ENCODE measurements at regions of chr12 and their contacts with region 1.

Region 1: DNA sequence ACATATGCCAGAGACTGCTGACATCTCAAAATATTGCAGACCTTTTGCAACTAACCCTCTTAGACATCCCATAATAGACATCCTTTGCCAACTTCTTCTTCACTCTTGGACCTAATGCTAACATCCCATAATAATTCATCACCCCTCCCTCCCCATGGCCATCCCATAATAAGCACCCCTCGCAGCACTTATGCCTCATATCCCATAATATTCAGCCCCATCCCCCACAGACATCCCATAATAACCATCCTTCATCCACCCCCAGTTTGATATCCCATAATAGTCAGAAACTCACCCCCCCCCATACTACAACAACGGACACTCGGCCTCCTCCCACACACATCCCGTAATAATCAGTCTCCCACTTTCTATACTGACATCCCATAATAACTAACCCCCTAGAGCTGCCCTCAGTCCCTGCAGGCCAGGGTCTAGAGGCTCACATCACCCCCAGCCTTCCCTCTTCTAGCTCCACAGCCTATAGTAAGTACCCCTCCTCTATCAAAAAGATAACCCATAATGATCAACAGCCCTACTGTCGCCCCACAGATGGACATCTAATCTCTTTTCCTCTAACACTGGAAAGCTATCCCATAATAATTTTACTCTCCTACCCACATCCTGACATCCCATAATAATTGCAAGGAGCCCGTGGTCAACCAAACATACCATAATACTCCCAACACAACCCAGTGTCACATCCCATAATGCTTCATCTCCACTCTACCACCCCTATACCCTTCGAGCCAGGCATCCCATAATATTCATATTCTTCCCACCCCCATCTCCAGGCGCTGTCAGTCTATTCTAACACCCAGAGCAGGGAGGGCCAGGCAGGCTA is 792 bp upstream of the CHD4 start:
- DNase-seq: peak in 8 of 9 experiments; percentile 38 to 92 (median 67)
- ATAC-seq: peak; percentile 45
- H3K4me3 ChIP-seq: no peak overlapping the region
- H3K4me3 Mint-ChIP-seq: no peak overlapping the region
- H3K27ac ChIP-seq: peak overlapping the region; percentile 76 to 96
- H3K27ac Mint-ChIP-seq: no peak overlapping the region
- H3K4me1 ChIP-seq: peaks cover 63% of the 10 kb centered on the region
- H3K4me1 Mint-ChIP-seq: peaks cover 48% of the 10 kb centered on the region
- H3K27me3 ChIP-seq: no peaks in the 10 kb centered on the region
- H3K27me3 Mint-ChIP-seq: no peaks in the 10 kb centered on the region
- CTCF ChIP-seq: no peak

Region 2: DNA sequence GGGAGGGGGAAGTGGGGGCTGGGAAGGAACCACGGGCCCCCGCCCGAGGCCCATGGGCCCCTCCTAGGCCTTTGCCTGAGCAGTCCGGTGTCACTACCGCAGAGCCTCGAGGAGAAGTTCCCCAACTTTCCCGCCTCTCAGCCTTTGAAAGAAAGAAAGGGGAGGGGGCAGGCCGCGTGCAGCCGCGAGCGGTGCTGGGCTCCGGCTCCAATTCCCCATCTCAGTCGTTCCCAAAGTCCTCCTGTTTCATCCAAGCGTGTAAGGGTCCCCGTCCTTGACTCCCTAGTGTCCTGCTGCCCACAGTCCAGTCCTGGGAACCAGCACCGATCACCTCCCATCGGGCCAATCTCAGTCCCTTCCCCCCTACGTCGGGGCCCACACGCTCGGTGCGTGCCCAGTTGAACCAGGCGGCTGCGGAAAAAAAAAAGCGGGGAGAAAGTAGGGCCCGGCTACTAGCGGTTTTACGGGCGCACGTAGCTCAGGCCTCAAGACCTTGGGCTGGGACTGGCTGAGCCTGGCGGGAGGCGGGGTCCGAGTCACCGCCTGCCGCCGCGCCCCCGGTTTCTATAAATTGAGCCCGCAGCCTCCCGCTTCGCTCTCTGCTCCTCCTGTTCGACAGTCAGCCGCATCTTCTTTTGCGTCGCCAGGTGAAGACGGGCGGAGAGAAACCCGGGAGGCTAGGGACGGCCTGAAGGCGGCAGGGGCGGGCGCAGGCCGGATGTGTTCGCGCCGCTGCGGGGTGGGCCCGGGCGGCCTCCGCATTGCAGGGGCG is 73.9 kb before region 1 on chr12 and contains the start of gene GAPDH:
- CTCF ChIA-PET with region 1: interaction called, 4 read pairs
- POLR2A ChIA-PET with region 1: interaction called, 4 read pairs
- intact Hi-C with region 1: loop called (anchors 2 kb)
- DNase-seq: peak; percentile 66 to 92 (median 84)
- ATAC-seq: no peak
- H3K4me3 ChIP-seq: peak within 1 kb of the TSS; percentile 85 to 94
- H3K4me3 Mint-ChIP-seq: peak within 1 kb of the TSS; percentile 87
- H3K27ac ChIP-seq: peak within 1 kb of the TSS; percentile 85 to 88
- H3K27ac Mint-ChIP-seq: peak within 1 kb of the TSS; percentile 96
- H3K4me1 ChIP-seq: peaks cover 47% of the 10 kb centered on the region
- H3K4me1 Mint-ChIP-seq: peaks cover 49% of the 10 kb centered on the region
- H3K27me3 ChIP-seq: no peaks in the 10 kb centered on the region
- H3K27me3 Mint-ChIP-seq: no peaks in the 10 kb centered on the region
- CTCF ChIP-seq: no peak
- total RNA-seq, gene GAPDH: 503 to 513 TPM

Region 3: GRCh38 chr12:6569312-6569711 is 38.7 kb before region 1 on chr12:
- CTCF ChIA-PET with region 1: interaction called, 8 read pairs
- POLR2A ChIA-PET with region 1: interaction called, 4 read pairs
- intact Hi-C with region 1: loop called (anchors 2 to 5 kb)
- DNase-seq: no peak
- ATAC-seq: no peak
- H3K4me3 ChIP-seq: no peak overlapping the region
- H3K4me3 Mint-ChIP-seq: peak overlapping the region; percentile 65
- H3K27ac ChIP-seq: peak overlapping the region in 1 of 2 experiments; percentile 88
- H3K27ac Mint-ChIP-seq: peak overlapping the region; percentile 99
- H3K4me1 ChIP-seq: peaks cover 15% of the 10 kb centered on the region
- H3K4me1 Mint-ChIP-seq: peaks cover 46% of the 10 kb centered on the region
- H3K27me3 ChIP-seq: no peaks in the 10 kb centered on the region
- H3K27me3 Mint-ChIP-seq: no peaks in the 10 kb centered on the region
- CTCF ChIP-seq: no peak

Region 4: GRCh38 chr12:6632026-6632983 is 24.3 kb after region 1 on chr12:
- CTCF ChIA-PET with region 1: interaction called, 5 read pairs
- POLR2A ChIA-PET with region 1: interaction called, 12 read pairs
- intact Hi-C with region 1: loop called in 1 of 2 experiments (anchors 2 kb)
- DNase-seq: peak in 8 of 9 experiments; percentile 46 to 83 (median 66)
- ATAC-seq: peak; percentile 57
- H3K4me3 ChIP-seq: peak overlapping the region; percentile 58 to 68
- H3K4me3 Mint-ChIP-seq: peak overlapping the region; percentile 83
- H3K27ac ChIP-seq: peak overlapping the region; percentile 60 to 87
- H3K27ac Mint-ChIP-seq: peak overlapping the region; percentile 98
- H3K4me1 ChIP-seq: peaks cover 70% of the 10 kb centered on the region
- H3K4me1 Mint-ChIP-seq: peaks cover 66% of the 10 kb centered on the region
- H3K27me3 ChIP-seq: no peaks in the 10 kb centered on the region
- H3K27me3 Mint-ChIP-seq: no peaks in the 10 kb centered on the region
- CTCF ChIP-seq: no peak

Region 5: DNA sequence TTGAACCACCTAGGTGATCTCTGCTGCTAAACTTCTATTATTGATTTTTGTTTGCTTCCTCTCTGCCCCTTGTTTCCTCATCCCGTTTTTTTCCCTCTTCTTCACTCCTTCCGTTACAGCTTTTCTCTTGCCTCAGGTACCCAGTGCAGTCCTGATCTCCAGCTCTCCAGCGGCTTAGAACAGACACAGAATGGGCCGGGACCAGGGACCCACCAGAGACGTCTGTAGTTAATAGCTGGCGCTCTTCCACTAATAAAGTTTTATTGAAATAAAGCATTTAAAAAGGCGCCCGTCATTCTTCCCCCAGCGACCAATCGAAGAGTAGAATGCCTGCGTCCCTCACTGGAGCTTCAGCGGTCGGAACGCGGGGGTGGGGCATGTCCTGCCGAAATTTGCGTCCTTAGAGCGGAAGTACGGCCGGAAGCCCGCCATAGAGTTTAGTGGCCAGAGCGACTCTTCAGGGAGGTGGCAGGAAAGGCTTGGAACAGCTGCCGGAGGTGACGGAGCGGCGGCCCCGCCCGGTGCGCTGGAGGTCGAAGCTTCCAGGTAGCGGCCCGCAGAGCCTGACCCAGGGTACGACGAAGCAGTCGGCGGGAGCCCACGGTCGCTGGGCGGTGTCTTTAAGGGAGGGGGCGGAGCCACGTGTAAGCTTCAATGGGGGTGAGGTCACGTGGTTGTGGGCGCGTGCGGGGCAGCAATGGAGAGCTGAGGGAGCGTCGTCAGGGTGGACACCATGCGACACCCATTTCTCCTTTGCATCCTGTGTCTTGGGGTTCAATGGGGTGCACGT is 115.8 kb after region 1 on chr12 and contains the start of gene COPS7A:
- CTCF ChIA-PET with region 1: interaction called, 3 read pairs
- POLR2A ChIA-PET with region 1: interaction called, 8 read pairs
- intact Hi-C with region 1: loop called in 1 of 2 experiments (anchors 5 kb)
- DNase-seq: peak; percentile 83 to 98 (median 97)
- ATAC-seq: peak; percentile 85
- H3K4me3 ChIP-seq: peak within 1 kb of the TSS; percentile 59 to 68
- H3K4me3 Mint-ChIP-seq: peak within 1 kb of the TSS; percentile 83
- H3K27ac ChIP-seq: peak within 1 kb of the TSS; percentile 67 to 92
- H3K27ac Mint-ChIP-seq: peak within 1 kb of the TSS; percentile 94
- H3K4me1 ChIP-seq: peaks cover 19% of the 10 kb centered on the region
- H3K4me1 Mint-ChIP-seq: peaks cover 27% of the 10 kb centered on the region
- H3K27me3 ChIP-seq: no peaks in the 10 kb centered on the region
- H3K27me3 Mint-ChIP-seq: no peaks in the 10 kb centered on the region
- CTCF ChIP-seq: peak; percentile 28
- total RNA-seq, gene COPS7A: 11.0 to 11.1 TPM

Region 6: DNA sequence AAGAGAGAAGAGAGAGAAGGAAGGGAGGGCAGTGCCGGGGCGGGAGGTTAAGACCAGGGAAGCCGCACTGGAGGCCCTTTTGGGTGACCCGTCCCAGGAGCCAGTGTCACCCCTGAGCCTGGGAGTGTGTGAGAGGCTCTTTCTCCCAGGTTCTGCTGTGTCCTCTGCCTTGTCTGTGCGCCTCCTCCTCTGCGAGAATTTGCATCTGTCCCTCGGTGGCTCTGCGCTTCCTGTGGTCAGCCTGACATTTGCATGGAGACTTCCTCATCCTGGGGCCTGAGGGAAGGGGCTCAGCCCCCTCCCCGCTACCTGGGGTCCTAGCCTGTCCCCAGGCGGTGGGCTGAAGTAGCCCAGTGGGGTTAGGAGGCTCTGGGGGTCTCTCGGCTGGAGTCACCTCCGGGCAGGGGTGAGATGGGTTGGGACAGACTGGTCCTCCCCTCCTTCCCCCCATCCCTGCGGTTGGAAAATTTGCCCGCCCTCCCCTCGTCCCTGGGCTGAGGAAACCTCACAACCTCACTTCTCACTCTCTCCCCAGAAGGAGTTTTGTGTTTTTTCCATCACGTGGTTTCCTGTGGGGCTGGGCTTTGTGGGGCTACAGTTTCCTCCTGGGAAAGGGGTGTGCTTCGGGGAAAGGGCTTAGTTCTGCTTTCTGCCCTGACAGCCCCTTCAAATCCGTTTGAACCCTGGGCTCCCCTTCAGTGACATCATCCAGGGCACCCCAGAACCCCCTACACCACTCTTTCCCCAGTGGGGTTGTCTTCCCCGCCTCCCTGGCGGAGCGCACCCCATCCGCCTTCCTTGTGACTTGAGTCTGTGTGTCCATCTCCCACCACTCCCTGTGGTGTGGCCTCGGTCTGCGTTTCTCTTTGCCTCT is 345.7 kb after region 1 on chr12:
- CTCF ChIA-PET with region 1: no interaction called
- POLR2A ChIA-PET with region 1: no interaction called
- intact Hi-C with region 1: loop called (anchors 5 to 10 kb)
- DNase-seq: peak in 8 of 9 experiments; percentile 69 to 91 (median 82)
- ATAC-seq: peak; percentile 27
- H3K4me3 ChIP-seq: peak overlapping the region; percentile 93 to 95
- H3K4me3 Mint-ChIP-seq: peak overlapping the region; percentile 99
- H3K27ac ChIP-seq: peak overlapping the region; percentile 72 to 93
- H3K27ac Mint-ChIP-seq: peak overlapping the region; percentile 100
- H3K4me1 ChIP-seq: peaks cover 70% of the 10 kb centered on the region
- H3K4me1 Mint-ChIP-seq: peaks cover 81% of the 10 kb centered on the region
- H3K27me3 ChIP-seq: no peaks in the 10 kb centered on the region
- H3K27me3 Mint-ChIP-seq: no peaks in the 10 kb centered on the region
- CTCF ChIP-seq: no peak

Measured in CD8-positive, alpha-beta T cell (primary cell).